ENCODE measurements at regions of chr13 and their contacts with region 1.

Region 1: DNA sequence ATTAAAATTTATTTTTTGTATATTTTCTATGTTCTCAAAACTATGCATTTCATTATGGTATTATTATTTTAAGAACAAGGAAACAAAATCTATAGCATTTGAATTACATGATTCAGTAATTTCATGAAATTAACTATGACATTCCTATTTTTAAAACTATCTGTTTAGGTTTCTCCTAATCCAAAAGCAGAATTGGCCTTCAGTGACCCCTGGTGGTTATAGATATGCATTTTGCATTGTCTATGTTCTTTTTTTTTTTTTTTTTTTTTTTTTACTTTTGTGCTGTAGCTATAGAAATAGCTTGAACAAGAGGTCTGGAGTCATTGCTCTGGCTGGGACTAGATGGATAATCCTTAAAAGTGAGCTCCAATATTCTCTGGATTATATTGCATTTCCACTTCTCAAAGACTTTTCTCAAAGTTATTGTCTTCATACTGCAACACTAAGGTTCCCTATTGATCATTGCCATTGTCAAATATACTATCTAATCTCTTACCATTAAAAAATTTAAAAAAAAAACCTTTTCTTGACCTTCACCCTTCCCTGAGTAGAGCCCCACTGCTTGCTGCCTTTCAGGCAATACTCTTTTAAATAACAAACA is 15.9 kb upstream of the DNAJC3 start:
- DNase-seq: no peak
- ATAC-seq: no peak
- H3K4me3 ChIP-seq: no peak overlapping the region
- H3K27ac ChIP-seq: no peak overlapping the region
- H3K4me1 ChIP-seq: no peaks in the 10 kb centered on the region
- H3K27me3 ChIP-seq: peaks cover 0 to 5% (median 0%) of the 10 kb centered on the region in 7 donors
- CTCF ChIP-seq: peak; percentile 26 to 67 (median 58)

Region 2: GRCh38 chr13:95494082-95494681 is 166.9 kb before region 1 on chr13:
- intact Hi-C with region 1: loop called in 4 of 10 experiments (anchors 5 to 10 kb)
- DNase-seq: peak in 1 of 2 donors; percentile 16
- ATAC-seq: no peak
- H3K4me3 ChIP-seq: no peak overlapping the region
- H3K27ac ChIP-seq: no peak overlapping the region
- H3K4me1 ChIP-seq: peaks cover 0 to 16% (median 0%) of the 10 kb centered on the region in 9 donors
- H3K27me3 ChIP-seq: no peaks in the 10 kb centered on the region
- CTCF ChIP-seq: peak; percentile 17 to 76 (median 69)

Region 3: GRCh38 chr13:95536632-95537241 is 124.3 kb before region 1 on chr13:
- intact Hi-C with region 1: loop called in 6 of 10 experiments (anchors 5 to 10 kb)
- DNase-seq: no peak
- ATAC-seq: no peak
- H3K4me3 ChIP-seq: no peak overlapping the region
- H3K27ac ChIP-seq: no peak overlapping the region
- H3K4me1 ChIP-seq: peaks cover 0 to 18% (median 11%) of the 10 kb centered on the region in 9 donors
- H3K27me3 ChIP-seq: peaks cover 0 to 3% (median 0%) of the 10 kb centered on the region in 7 donors
- CTCF ChIP-seq: peak in 8 of 9 donors; percentile 17 to 62 (median 50)

Region 4: DNA sequence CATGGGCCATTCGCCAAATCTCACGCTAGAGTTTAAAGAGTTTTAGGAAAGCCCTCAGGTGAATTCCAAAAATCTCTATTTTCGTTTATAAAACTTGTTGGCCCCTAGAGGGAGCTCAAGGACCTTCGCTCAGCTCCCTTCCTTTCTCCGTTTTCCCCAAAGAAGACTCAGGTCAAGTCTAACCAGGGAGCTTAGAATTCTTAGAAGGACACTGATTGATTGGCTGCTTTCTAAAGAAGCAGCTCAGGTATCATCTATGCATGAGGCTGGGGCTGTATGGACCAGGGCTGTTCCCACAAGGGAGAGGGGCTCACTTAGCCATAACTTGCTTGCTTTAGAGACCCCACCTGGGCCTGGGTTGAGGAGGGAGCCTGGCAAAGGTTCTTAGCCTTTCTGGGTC is 37.1 kb before region 1 on chr13:
- intact Hi-C with region 1: loop called in 2 of 10 experiments (anchors 5 kb)
- DNase-seq: no peak
- ATAC-seq: peak in 2 of 8 donors; percentile 35 to 61
- H3K4me3 ChIP-seq: no peak overlapping the region
- H3K27ac ChIP-seq: no peak overlapping the region
- H3K4me1 ChIP-seq: peaks cover 0 to 12% (median 6%) of the 10 kb centered on the region in 9 donors
- H3K27me3 ChIP-seq: no peaks in the 10 kb centered on the region
- CTCF ChIP-seq: peak; percentile 50 to 77 (median 67)